ENCODE measurements at regions of chr11 and their contacts with region 1.

Region 1: DNA sequence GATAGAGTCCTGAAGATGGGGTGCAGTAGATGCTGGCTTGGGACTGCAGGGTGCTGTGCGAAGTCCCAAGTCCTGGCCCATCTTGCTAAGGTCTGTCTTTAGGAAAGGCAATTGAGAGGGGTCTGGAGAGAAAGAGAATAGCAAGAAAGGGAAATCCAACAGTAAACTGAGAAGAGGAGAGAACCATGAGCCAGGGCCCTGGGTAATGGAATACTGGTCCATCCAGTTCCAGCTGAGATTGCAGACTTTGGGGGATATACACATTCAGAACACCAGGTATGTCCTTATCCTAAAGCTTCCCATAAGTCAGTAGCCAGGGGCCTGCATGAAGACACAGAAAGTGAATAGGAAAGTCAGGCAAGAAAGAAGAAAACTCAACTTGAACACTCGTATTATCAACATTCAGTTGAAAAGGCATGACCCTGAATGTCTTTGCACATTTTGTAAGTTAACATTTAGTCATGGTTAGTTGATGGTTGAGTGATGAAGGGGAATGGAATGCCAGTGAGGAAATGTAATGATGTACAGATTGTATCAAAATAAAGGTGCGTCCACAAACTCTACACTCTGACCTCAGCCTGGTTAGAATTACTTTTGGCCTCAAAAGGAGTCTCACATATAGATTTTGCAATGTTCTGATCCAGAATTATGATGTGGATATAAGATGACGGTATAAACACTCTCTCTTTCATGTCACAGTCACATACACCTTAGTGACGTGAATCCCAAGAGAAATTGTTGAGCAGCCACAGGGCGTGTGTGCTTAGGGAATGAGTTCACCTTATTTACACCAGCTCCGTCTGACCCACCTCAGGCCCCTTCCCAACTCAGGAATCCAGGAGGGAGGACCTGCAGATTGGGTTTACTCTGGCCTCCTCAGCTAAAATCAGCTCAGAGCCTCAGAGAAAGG is 100.3 kb downstream of the RDX start:
- DNase-seq: no peak
- ATAC-seq: no peak
- H3K4me3 Mint-ChIP-seq: no peak overlapping the region
- H3K27ac Mint-ChIP-seq: no peak overlapping the region
- H3K4me1 Mint-ChIP-seq: peaks cover 14% of the 10 kb centered on the region
- H3K27me3 Mint-ChIP-seq: peaks cover 12% of the 10 kb centered on the region

Region 2: GRCh38 chr11:110165039-110165925 is 30.8 kb before region 1 on chr11:
- CTCF ChIA-PET with region 1: no interaction called
- POLR2A ChIA-PET with region 1: no interaction called
- DNase-seq: no peak
- ATAC-seq: no peak
- H3K4me3 Mint-ChIP-seq: no peak overlapping the region
- H3K27ac Mint-ChIP-seq: no peak overlapping the region
- H3K4me1 Mint-ChIP-seq: no peaks in the 10 kb centered on the region
- H3K27me3 Mint-ChIP-seq: peaks cover 15% of the 10 kb centered on the region

Region 3: DNA sequence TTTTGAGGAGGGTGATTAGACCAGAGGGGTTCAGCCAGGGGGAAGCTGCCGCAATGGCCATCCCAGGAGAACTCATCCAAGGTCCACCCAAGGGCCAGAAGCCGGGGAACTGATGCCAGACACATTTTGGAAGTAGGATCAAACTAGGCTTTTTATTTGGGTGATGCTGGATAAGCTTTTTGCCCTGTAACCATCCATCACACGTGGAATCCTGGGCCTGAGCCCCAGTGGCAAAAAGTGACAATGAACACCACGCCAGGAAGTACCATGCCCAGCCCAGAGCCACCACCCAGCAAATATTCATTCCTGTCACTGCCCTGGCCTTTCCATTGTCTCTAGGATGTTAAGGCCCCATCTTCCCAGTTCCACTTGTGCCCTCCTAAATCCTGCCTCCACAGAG is 17.0 kb before region 1 on chr11:
- CTCF ChIA-PET with region 1: interaction called, 11 read pairs
- POLR2A ChIA-PET with region 1: no interaction called
- DNase-seq: no peak
- ATAC-seq: no peak
- H3K4me3 Mint-ChIP-seq: no peak overlapping the region
- H3K27ac Mint-ChIP-seq: no peak overlapping the region
- H3K4me1 Mint-ChIP-seq: peaks cover 4% of the 10 kb centered on the region
- H3K27me3 Mint-ChIP-seq: peaks cover 6% of the 10 kb centered on the region

Region 4: DNA sequence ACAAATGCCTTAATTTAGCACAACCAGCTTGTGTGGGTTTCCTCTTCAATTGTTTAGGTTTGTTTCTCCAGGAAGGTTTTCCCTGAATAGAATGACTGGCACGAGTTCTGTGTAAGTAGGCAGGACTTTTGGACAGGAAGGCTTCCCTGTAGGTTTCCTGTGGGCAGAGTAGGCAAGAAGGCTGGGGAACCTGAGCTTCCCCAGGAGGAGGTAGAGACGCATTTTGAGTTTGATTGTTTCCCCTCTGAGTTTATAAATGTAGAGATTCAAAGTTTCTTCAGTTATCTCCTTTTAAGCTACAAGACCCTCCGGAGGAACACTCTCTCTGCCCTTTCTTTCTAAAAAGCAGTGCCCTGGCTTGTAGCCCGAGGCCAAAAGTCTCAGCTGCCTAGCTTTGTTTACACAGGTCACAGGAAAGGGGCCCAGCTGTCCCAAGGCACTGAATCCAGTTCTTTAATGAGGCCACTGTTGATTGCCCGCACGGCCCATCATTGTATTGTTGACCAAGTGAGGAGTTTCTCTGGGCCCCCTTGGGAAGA is 166.9 kb after region 1 on chr11:
- CTCF ChIA-PET with region 1: interaction called, 29 read pairs
- POLR2A ChIA-PET with region 1: no interaction called
- DNase-seq: no peak
- ATAC-seq: no peak
- H3K4me3 Mint-ChIP-seq: no peak overlapping the region
- H3K27ac Mint-ChIP-seq: no peak overlapping the region
- H3K4me1 Mint-ChIP-seq: peaks cover 10% of the 10 kb centered on the region
- H3K27me3 Mint-ChIP-seq: no peaks in the 10 kb centered on the region

Region 5: DNA sequence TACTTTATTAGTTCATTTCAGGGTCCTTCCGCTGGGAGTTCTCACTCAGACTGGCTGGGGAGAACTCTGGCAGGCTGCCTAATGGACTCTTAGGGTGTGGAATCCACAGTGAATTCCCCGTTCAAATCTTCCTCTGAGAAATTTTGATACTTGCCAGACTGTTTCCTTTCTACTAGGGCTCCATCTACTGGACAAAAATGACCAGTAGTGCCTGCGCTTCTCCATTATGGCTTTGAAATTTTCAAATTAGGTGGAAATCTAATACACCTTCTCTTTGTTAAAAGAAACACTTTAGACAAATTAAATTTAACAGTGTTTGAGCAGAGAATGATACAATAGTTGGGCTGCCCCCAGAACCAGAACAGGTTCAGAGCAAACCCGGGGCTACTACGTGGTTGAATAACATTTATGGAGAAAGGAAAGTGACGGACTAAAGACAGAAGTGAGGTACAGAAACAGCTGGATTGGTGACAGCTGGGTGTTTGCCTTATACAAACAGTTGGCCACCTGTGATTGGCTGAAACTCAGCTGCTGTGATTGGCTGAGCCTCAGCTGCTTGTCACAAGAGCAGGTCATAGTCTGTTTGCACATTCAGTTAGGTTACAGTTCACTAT is 180.7 kb after region 1 on chr11:
- CTCF ChIA-PET with region 1: interaction called, 35 read pairs
- POLR2A ChIA-PET with region 1: no interaction called
- DNase-seq: peak; percentile 42
- ATAC-seq: peak; percentile 74
- H3K4me3 Mint-ChIP-seq: no peak overlapping the region
- H3K27ac Mint-ChIP-seq: no peak overlapping the region
- H3K4me1 Mint-ChIP-seq: peaks cover 12% of the 10 kb centered on the region
- H3K27me3 Mint-ChIP-seq: no peaks in the 10 kb centered on the region

Measured in activated CD8-positive, alpha-beta T cell treated with anti-CD3 and anti-CD28 coated beads, Interleukin-2, amount 10 ng/mL, durations not matched to agents 7 days and 5 days (primary cell).